ENCODE measurements at regions of chr18 and their contacts with region 1.

Region 1: GRCh38 chr18:59249205-59249774 is 24.0 kb downstream of the RAX start:
- DNase-seq: peak; percentile 65
- H3K4me3 ChIP-seq: no peak overlapping the region
- H3K27ac ChIP-seq: no peak overlapping the region
- H3K27me3 ChIP-seq: peaks cover 13% of the 10 kb centered on the region
- CTCF ChIP-seq: peak; percentile 88

Region 2: DNA sequence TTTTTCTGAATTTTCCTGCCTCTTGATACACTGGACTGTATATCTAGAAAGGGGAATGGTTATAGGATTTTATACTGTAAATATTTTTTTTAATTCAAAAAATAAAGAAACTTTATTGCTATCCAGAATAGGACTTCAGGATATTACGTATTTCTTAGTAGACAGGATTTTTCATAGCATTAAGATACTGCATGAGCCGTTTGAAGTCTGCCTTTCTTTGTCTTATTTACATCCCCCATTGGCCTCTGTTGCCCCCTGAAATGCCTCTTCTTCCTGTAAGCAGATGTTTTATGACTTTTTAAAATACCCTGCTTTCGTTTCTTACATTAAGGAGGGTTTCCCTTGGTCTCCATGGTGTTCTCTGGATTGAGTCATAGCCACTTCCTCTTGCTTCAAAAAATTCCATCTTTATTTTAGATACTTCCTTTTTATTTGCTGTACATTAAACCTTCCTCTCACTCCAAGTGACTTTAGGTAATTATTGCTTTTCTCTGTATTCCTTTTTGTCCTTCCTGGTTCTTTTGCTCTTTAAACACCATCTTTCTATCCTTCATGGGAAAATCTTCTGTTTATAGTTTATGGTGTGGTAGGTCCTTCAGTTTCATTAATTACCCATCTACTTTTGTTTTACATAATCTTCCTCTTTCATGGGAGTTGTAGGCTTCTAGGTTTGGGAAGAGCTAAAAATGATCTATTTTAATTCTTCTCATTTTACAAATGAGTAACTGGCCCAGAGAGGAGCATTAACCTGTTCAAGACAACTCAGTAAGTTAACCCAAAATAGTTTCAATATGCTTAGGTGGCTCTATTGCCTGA is 312.0 kb before region 1 on chr18:
- CTCF ChIA-PET with region 1: no interaction called
- POLR2A ChIA-PET with region 1: no interaction called
- DNase-seq: no peak
- H3K4me3 ChIP-seq: no peak overlapping the region
- H3K27ac ChIP-seq: no peak overlapping the region
- H3K27me3 ChIP-seq: no peaks in the 10 kb centered on the region
- CTCF ChIP-seq: no peak

Region 3: DNA sequence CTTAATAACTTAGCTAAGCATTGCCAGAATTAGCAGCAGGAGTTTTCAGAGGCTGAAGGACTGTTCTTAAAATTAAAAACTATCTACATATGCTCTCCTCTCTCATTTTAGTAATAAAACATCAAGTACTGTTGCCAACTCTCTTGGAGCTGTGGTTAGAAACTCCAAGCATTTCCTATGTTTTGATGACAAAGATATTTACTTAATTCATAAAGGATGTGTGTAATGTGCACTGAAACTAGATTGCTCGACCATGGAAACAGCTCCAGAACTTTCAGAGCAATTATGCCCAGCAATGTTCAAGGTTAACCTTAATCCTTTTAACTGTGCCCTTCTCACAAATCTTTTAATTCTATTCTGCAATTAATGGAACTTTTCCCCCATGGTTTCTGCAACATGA is 20.9 kb before region 1 on chr18:
- CTCF ChIA-PET with region 1: interaction called, 16 read pairs
- POLR2A ChIA-PET with region 1: no interaction called
- DNase-seq: no peak
- H3K4me3 ChIP-seq: no peak overlapping the region
- H3K27ac ChIP-seq: no peak overlapping the region
- H3K27me3 ChIP-seq: peaks cover 46% of the 10 kb centered on the region
- CTCF ChIP-seq: no peak